ENCODE measurements at regions of chr4 and their contacts with region 1.

Region 1: GRCh38 chr4:68864438-68865187 is 48.8 kb downstream of the UGT2B10 start:
- DNase-seq: peak; percentile 89 to 96
- H3K4me3 ChIP-seq: no peak overlapping the region
- H3K4me3 Mint-ChIP-seq: peak overlapping the region; percentile 54
- H3K27ac Mint-ChIP-seq: peak overlapping the region; percentile 82
- H3K4me1 ChIP-seq: peaks cover 34% of the 10 kb centered on the region
- H3K4me1 Mint-ChIP-seq: peaks cover 32% of the 10 kb centered on the region
- H3K27me3 ChIP-seq: no peaks in the 10 kb centered on the region
- H3K27me3 Mint-ChIP-seq: no peaks in the 10 kb centered on the region
- CTCF ChIP-seq: no peak

Region 2: GRCh38 chr4:68283714-68284113 is 580.9 kb before region 1 on chr4:
- CTCF ChIA-PET with region 1: no interaction called
- POLR2A ChIA-PET with region 1: no interaction called
- intact Hi-C with region 1: loop called (anchors 2 kb)
- DNase-seq: no peak
- H3K4me3 ChIP-seq: no peak overlapping the region
- H3K4me3 Mint-ChIP-seq: no peak overlapping the region
- H3K27ac Mint-ChIP-seq: peak overlapping the region; percentile 82
- H3K4me1 ChIP-seq: peaks cover 41% of the 10 kb centered on the region
- H3K4me1 Mint-ChIP-seq: peaks cover 19% of the 10 kb centered on the region
- H3K27me3 ChIP-seq: no peaks in the 10 kb centered on the region
- H3K27me3 Mint-ChIP-seq: no peaks in the 10 kb centered on the region
- CTCF ChIP-seq: no peak

Region 3: DNA sequence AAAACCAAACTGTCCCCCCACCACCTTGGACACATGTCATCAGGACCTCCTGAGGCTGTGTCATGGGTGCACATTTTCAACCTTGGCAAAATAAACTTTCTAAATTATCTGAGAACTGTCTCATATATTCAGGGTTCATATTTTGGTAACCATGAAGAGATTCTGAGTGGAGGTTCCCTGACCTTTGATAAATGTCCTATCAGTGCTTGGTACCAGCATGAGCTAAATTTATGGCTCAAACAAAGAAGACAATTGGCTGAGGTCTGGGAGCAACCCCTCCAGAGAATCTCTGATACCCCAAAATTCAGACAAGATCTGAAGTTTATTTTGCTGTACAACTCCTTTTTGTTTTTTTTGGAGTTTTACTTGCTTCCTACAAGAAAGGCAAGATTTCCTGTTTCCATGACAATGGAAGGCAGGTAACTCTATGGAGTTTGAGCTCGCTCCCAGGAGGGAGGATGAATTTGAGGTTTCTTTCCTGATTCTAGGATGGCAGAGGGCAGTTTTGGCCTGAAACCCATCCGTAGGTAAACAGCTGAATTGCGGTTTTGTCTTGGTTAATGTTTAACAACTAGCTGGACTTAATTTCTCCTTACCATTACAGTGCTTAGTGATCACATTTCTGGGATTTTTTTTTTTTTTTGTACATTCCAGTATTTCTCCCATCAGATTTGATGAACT is 208.7 kb before region 1 on chr4:
- CTCF ChIA-PET with region 1: no interaction called
- POLR2A ChIA-PET with region 1: no interaction called
- intact Hi-C with region 1: loop called (anchors 5 kb)
- DNase-seq: peak; percentile 45 to 48
- H3K4me3 ChIP-seq: no peak overlapping the region
- H3K4me3 Mint-ChIP-seq: peak overlapping the region; percentile 54
- H3K27ac Mint-ChIP-seq: peak overlapping the region; percentile 39
- H3K4me1 ChIP-seq: peaks cover 28% of the 10 kb centered on the region
- H3K4me1 Mint-ChIP-seq: peaks cover 17% of the 10 kb centered on the region
- H3K27me3 ChIP-seq: no peaks in the 10 kb centered on the region
- H3K27me3 Mint-ChIP-seq: no peaks in the 10 kb centered on the region
- CTCF ChIP-seq: no peak

Region 4: GRCh38 chr4:68693325-68694075 is 171.1 kb before region 1 on chr4:
- CTCF ChIA-PET with region 1: no interaction called
- POLR2A ChIA-PET with region 1: no interaction called
- intact Hi-C with region 1: loop called (anchors 2 kb)
- DNase-seq: peak; percentile 81 to 90
- H3K4me3 ChIP-seq: no peak overlapping the region
- H3K4me3 Mint-ChIP-seq: no peak overlapping the region
- H3K27ac Mint-ChIP-seq: peak overlapping the region; percentile 72
- H3K4me1 ChIP-seq: peaks cover 20% of the 10 kb centered on the region
- H3K4me1 Mint-ChIP-seq: peaks cover 6% of the 10 kb centered on the region
- H3K27me3 ChIP-seq: no peaks in the 10 kb centered on the region
- H3K27me3 Mint-ChIP-seq: no peaks in the 10 kb centered on the region
- CTCF ChIP-seq: no peak

Region 5: GRCh38 chr4:68820770-68821169 is 43.8 kb before region 1 on chr4:
- CTCF ChIA-PET with region 1: no interaction called
- POLR2A ChIA-PET with region 1: no interaction called
- intact Hi-C with region 1: loop called (anchors 2 kb)
- DNase-seq: no peak
- H3K4me3 ChIP-seq: no peak overlapping the region
- H3K4me3 Mint-ChIP-seq: no peak overlapping the region
- H3K27ac Mint-ChIP-seq: no peak overlapping the region
- H3K4me1 ChIP-seq: no peaks in the 10 kb centered on the region
- H3K4me1 Mint-ChIP-seq: peaks cover 11% of the 10 kb centered on the region
- H3K27me3 ChIP-seq: no peaks in the 10 kb centered on the region
- H3K27me3 Mint-ChIP-seq: no peaks in the 10 kb centered on the region
- CTCF ChIP-seq: no peak

Region 6: DNA sequence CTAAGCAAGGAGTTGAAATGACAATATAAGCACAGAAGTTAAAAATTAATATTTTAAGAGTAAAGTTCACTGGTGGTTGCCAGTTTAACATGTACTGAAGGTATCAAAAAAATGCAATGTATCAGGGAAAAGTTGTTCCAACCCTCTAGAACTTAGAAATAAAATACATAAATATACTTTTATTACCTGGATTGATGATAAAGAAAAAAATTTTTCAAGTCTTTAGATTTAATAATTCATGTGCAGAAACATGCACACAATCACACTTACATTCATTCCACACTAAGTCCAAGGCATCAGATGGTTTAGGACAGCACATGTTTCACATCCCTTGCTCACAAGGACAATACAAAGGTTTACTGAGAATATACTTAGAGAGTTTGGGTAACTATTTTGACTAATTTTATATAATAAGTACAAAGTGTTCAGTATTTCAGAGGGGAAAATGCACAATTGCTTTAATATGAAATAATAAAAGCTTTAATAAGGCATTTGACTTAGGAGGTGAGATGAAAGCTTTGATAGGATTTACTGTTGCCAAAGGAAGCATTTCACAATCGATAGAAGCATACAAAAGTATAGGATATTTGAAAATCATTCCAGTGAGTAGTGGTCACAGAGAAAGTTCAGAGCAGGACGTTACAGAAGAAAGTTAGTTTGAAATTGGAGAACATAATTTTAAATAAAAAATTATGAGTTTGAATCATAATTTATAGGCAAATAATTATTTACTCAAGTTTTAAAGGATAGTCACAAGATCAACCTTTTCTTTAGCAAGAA is 87.4 kb after region 1 on chr4:
- CTCF ChIA-PET with region 1: no interaction called
- POLR2A ChIA-PET with region 1: no interaction called
- intact Hi-C with region 1: loop called (anchors 2 kb)
- DNase-seq: no peak
- H3K4me3 ChIP-seq: no peak overlapping the region
- H3K4me3 Mint-ChIP-seq: no peak overlapping the region
- H3K27ac Mint-ChIP-seq: no peak overlapping the region
- H3K4me1 ChIP-seq: peaks cover 29% of the 10 kb centered on the region
- H3K4me1 Mint-ChIP-seq: peaks cover 20% of the 10 kb centered on the region
- H3K27me3 ChIP-seq: no peaks in the 10 kb centered on the region
- H3K27me3 Mint-ChIP-seq: no peaks in the 10 kb centered on the region
- CTCF ChIP-seq: no peak

Region 7: DNA sequence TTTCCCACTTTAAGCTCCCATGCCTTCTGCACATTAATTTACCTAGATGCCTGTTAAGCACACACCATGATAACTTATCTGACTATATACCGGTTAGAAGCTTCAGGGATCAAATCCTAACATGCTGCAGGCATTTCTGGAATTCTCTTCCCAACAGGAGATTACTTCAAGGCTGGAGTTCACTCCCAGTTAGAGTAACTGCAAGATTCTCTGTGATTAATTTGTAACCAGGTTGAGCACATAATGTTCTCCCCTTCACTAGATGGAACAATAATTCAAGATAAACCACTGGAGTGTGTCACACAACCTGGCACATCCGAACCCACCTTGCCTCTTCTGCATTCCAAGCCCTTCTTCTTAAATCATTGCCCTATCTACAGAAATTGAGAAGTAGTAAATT is 98.8 kb after region 1 on chr4:
- CTCF ChIA-PET with region 1: no interaction called
- POLR2A ChIA-PET with region 1: no interaction called
- intact Hi-C with region 1: loop called (anchors 2 kb)
- DNase-seq: peak; percentile 29 to 42
- H3K4me3 ChIP-seq: no peak overlapping the region
- H3K4me3 Mint-ChIP-seq: peak overlapping the region; percentile 38
- H3K27ac Mint-ChIP-seq: peak overlapping the region; percentile 34
- H3K4me1 ChIP-seq: peaks cover 49% of the 10 kb centered on the region
- H3K4me1 Mint-ChIP-seq: peaks cover 34% of the 10 kb centered on the region
- H3K27me3 ChIP-seq: no peaks in the 10 kb centered on the region
- H3K27me3 Mint-ChIP-seq: no peaks in the 10 kb centered on the region
- CTCF ChIP-seq: no peak